ENCODE measurements at regions of chr7 and their contacts with region 1.

Region 1: DNA sequence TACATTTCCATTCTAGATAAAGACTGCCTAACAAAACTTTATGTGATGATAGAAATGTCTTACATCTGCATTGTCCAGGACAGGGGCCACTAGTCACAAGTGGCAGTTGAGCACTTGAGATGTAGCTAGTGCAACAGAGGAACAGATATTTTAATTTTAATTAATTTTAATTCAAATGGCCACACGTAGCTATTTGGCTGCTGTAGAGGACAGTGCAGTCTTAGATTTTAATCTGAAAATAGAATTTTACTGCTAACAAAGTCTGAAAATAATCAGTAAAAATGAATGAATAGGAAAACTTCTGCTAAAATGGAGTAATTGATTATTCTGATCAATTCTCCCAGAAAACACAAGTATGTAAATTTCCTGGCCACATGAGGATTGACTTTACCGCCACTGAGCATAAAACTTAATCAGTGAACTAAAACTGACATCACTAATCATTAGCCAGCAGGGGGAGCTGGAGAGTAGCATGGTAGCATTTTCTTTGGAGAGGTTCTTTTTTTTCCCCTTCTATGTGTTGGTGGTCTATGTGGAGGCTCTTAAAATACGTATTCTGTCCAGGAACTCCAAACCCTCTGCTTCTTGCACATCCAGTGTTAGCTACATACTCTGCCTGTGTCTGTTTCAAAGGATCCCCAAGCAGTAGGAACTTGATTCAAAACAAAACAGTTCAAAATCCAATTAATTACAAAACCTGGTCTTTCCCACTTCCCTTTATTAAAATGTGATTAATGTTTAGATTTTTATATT is 52.1 kb downstream of the TSPAN12 start:
- DNase-seq: peak; percentile 68
- ATAC-seq: peak; percentile 39
- H3K4me3 Mint-ChIP-seq: no peak overlapping the region
- H3K27ac Mint-ChIP-seq: no peak overlapping the region
- H3K4me1 Mint-ChIP-seq: no peaks in the 10 kb centered on the region
- H3K27me3 Mint-ChIP-seq: peaks cover 2% of the 10 kb centered on the region

Region 2: GRCh38 chr7:120792091-120792860 is 13.5 kb before region 1 on chr7:
- CTCF ChIA-PET with region 1: interaction called, 43 read pairs
- POLR2A ChIA-PET with region 1: no interaction called
- intact Hi-C with region 1: no loop called
- DNase-seq: peak; percentile 79
- ATAC-seq: peak; percentile 73
- H3K4me3 Mint-ChIP-seq: no peak overlapping the region
- H3K27ac Mint-ChIP-seq: no peak overlapping the region
- H3K4me1 Mint-ChIP-seq: no peaks in the 10 kb centered on the region
- H3K27me3 Mint-ChIP-seq: peaks cover 8% of the 10 kb centered on the region

Region 3: DNA sequence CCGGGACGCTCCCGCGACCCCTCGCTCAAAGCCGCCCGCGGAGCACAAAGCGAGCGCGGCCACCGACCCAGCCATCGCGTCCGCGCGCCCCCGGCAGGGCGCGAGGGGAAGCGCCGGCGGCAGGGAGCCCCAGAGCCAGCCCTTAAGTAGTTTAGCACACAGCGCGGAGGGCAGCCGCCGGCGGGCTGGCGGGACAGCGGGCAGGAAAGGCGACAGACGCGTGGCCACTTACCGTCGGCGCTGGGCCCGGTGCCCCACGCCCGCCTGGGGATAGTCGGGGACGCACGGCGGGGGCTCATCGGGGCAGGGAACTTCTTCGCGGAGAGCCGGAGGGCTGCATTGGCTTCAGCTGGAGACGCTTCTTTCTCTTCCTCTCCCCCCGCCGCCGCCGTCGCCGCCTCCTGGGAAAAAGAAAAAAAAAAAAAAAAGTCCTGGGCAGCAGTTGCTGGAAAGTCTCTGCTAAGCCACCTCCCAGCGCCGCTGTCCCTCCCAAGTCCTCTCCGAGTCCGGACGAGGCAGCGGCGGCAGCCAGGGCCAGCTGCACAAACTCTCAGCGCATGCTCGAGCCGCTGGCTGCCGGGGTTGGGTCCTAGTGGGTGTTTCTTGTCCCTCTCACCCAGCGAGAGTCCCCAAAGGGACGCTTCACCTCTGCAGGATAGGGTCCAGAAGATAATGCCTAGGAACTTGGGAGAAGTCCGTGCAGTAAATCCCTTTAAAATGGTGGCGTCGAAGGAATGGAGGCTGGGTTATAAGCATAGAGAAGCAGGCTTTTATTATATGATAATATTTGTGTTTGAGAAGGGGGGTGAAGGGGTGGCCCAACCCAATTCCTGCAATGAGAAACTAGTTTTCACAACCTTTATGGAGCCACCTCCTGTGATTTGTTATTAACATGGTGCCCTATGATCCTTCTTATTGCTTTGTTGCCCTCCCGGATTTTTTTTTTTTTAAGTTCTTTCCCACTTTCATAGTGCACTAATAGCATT is 52.1 kb after region 1 on chr7 and contains the start of gene TSPAN12:
- CTCF ChIA-PET with region 1: interaction called, 3 read pairs
- POLR2A ChIA-PET with region 1: no interaction called
- intact Hi-C with region 1: loop called (anchors 1 kb)
- DNase-seq: peak; percentile 72
- ATAC-seq: peak; percentile 95
- H3K4me3 Mint-ChIP-seq: peak within 1 kb of the TSS; percentile 71
- H3K27ac Mint-ChIP-seq: no peak within 1 kb of the TSS
- H3K4me1 Mint-ChIP-seq: peaks cover 8% of the 10 kb centered on the region
- H3K27me3 Mint-ChIP-seq: peaks cover 47% of the 10 kb centered on the region
- total RNA-seq, gene TSPAN12: not detected

Region 4: GRCh38 chr7:120941064-120941463 is 135.3 kb after region 1 on chr7:
- CTCF ChIA-PET with region 1: interaction called, 7 read pairs
- POLR2A ChIA-PET with region 1: no interaction called
- intact Hi-C with region 1: loop called (anchors 1 kb)
- DNase-seq: no peak
- ATAC-seq: no peak
- H3K4me3 Mint-ChIP-seq: no peak overlapping the region
- H3K27ac Mint-ChIP-seq: no peak overlapping the region
- H3K4me1 Mint-ChIP-seq: no peaks in the 10 kb centered on the region
- H3K27me3 Mint-ChIP-seq: peaks cover 2% of the 10 kb centered on the region

Region 5: GRCh38 chr7:121081327-121081936 is 275.6 kb after region 1 on chr7:
- CTCF ChIA-PET with region 1: interaction called, 15 read pairs
- POLR2A ChIA-PET with region 1: no interaction called
- intact Hi-C with region 1: loop called (anchors 1 kb)
- DNase-seq: no peak
- ATAC-seq: peak; percentile 65
- H3K4me3 Mint-ChIP-seq: no peak overlapping the region
- H3K27ac Mint-ChIP-seq: no peak overlapping the region
- H3K4me1 Mint-ChIP-seq: no peaks in the 10 kb centered on the region
- H3K27me3 Mint-ChIP-seq: peaks cover 12% of the 10 kb centered on the region

Region 6: GRCh38 chr7:121107923-121108498 is 302.2 kb after region 1 on chr7:
- CTCF ChIA-PET with region 1: interaction called, 11 read pairs
- POLR2A ChIA-PET with region 1: no interaction called
- intact Hi-C with region 1: loop called (anchors 1 kb)
- DNase-seq: no peak
- ATAC-seq: peak; percentile 87
- H3K4me3 Mint-ChIP-seq: no peak overlapping the region
- H3K27ac Mint-ChIP-seq: no peak overlapping the region
- H3K4me1 Mint-ChIP-seq: no peaks in the 10 kb centered on the region
- H3K27me3 Mint-ChIP-seq: peaks cover 10% of the 10 kb centered on the region

Measured in activated CD4-positive, alpha-beta T cell treated with anti-CD3 and anti-CD28 coated beads for 36 hours (primary cell).